ENCODE measurements at regions of chrX and their contacts with region 1.

Region 1: DNA sequence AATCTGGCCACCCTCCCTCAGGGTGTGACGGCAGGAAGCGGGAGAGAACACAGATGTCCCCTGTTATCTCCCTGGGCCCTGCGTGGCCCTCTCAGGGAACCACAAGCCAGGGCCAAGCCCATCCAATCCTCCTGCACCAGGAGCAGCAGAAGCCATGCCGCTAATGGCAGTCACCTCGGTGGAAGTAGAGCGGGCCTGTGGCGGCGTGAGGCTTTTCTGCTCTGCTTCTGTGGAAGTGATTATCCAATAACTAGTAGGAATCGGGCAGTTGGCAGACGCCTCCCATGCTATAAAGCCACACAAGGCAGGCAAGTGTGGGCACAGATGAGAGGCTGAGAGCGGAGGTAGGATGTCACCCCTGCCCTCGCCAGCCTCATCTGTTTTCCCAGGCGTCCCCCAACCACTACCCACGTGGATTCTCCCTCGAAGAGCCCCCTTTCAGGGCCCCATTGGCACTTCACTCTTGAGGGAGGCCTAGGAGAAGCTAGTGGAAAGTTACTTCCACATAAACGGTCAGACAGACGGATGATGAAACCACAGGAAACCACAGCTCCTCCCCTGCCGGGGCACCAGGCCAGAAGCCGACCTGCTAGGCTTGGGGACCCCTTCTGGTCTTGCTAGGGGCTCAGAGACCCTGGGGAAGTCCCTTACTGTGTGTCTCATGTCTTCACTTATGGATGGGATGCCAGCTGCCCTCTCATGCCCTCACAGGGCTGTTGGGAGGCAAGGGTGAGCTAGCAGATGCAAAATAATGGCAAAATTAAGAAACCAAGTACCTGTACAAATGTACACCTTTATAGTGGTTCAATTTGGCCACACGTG is 18.8 kb upstream of the TMSB4X start:
- DNase-seq: peak; percentile 30
- CTCF ChIP-seq: no peak

Region 2: DNA sequence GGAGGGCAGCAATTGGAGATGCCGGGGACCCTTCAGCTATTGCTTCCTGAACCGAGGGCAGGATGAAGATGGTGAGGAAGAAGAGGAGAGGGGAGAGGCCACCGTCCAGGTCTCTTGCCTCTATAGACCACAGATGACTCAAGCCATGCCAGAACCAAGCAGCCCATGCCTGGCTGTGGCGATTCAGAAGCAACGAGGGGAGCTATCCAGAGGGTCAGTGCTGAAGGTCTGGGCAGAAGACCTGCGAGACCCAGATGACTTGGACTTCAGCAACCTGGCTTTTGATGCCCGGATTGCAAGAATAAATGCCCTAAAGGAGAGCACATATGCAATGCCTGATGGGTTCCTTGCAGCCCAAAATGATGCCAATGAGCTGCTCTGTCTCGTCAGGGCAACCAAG is 235.1 kb before region 1 on chrX:
- CTCF ChIA-PET with region 1: no interaction called
- POLR2A ChIA-PET with region 1: no interaction called
- DNase-seq: no peak
- CTCF ChIP-seq: no peak

Region 3: GRCh38 chrX:12974796-12975669 is 18.9 kb after region 1 on chrX and contains the start of gene TMSB4X:
- CTCF ChIA-PET with region 1: interaction called, 28 read pairs
- POLR2A ChIA-PET with region 1: interaction called, 35 read pairs
- DNase-seq: peak; percentile 63
- CTCF ChIP-seq: no peak

Region 4: DNA sequence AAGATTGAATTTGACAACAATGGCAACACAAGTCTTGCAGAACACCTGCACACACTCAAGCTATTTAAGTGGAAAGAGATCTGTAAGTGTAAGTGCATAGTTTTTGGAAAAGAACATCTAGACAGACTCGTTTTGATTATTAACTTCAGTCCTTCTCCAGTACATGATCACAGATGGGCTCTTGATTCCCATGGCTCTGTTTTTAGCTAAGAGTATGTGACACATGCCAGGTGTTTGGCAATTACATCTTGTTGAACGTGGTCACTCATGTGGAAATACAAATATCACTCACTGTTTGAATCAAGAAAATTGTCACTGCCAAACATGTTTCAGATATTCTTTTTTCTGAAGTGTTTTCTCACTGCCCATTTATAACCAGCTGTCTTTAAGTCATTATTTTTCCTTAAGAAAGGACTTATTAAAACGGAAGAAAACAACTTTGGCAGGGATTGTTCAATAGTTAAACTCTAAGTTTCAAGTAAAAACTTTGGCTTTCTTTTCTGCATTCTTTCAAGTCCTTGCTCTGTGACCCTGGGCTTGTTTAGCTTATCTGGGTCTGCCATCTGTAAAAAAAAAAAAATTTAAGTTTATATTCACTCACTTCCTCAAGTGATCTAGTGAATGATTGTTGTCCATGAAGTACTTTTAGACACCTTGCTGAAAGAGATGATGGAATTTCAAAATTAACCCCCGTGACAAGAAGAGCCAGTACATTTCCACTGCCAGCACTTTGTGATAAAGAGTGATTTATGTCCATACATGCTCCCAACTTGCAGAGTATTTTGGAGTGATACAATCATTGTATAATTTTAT is 238.4 kb after region 1 on chrX:
- CTCF ChIA-PET with region 1: no interaction called
- POLR2A ChIA-PET with region 1: no interaction called
- DNase-seq: no peak
- CTCF ChIP-seq: no peak